Activated CD8-positive, alpha-beta T cell treated with anti-CD3 and anti-CD28 coated beads, Interleukin-2, amount 10 ng/mL, durations not matched to agents 7 days and 5 days (primary cell): ENCODE measurements at regions of chr4 and their contacts with region 1.

Region 1: GRCh38 chr4:99949034-99949998 is 759 bp downstream of the H2AZ1 start:
- DNase-seq: peak; percentile 96
- ATAC-seq: peak; percentile 25
- H3K4me3 Mint-ChIP-seq: no peak overlapping the region
- H3K27ac Mint-ChIP-seq: no peak overlapping the region
- H3K4me1 Mint-ChIP-seq: peaks cover 37% of the 10 kb centered on the region
- H3K27me3 Mint-ChIP-seq: no peaks in the 10 kb centered on the region

Region 2: GRCh38 chr4:99563310-99564186 is 385.8 kb before region 1 on chr4 and contains the start of gene TRMT10A:
- CTCF ChIA-PET with region 1: interaction called, 5 read pairs
- POLR2A ChIA-PET with region 1: interaction called, 12 read pairs
- DNase-seq: peak; percentile 97
- ATAC-seq: peak; percentile 95
- H3K4me3 Mint-ChIP-seq: peak within 1 kb of the TSS; percentile 89
- H3K27ac Mint-ChIP-seq: peak within 1 kb of the TSS; percentile 98
- H3K4me1 Mint-ChIP-seq: peaks cover 25% of the 10 kb centered on the region
- H3K27me3 Mint-ChIP-seq: peaks cover 19% of the 10 kb centered on the region
- total RNA-seq, gene TRMT10A: 7.4 to 8.2 TPM

Region 3: DNA sequence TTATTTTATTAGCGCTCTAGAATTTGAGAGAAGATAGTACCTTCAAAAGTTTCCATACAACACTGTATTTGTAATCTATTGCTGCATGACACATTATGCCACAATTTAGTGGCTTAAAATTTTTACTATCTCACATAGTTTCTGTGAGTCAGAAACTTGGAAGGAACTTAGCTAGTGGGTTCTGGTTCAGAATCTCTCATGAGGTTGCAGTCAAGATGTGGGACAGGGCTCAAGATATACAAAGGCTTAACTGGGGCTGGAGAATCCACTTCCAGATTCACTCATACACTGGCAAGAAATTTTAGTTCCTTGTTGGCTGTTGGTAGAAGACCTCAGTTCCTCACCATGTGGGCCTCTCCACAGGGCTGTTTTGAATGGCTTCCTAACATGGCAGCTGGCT is 280.2 kb before region 1 on chr4:
- CTCF ChIA-PET with region 1: no interaction called
- POLR2A ChIA-PET with region 1: no interaction called
- DNase-seq: no peak
- ATAC-seq: no peak
- H3K4me3 Mint-ChIP-seq: no peak overlapping the region
- H3K27ac Mint-ChIP-seq: no peak overlapping the region
- H3K4me1 Mint-ChIP-seq: no peaks in the 10 kb centered on the region
- H3K27me3 Mint-ChIP-seq: peaks cover 2% of the 10 kb centered on the region

Region 4: DNA sequence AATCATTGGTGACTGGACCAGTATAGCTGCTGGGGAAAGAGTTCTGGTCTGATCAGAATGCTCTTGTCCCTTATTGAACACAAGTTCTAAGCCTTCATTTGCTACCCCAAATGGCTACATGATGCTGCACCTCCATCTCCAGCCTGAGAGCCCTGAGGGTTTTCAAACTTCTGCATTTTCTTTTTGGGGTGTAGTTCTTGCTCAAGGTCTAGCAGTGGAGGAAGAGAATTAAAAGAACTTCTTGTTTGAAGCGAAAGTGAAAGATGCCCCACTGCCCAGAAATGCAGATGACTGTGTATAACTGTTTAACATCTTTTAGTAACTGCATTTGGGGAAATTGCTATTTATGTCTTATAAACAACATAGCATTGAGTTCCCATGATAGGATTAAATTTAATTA is 93.6 kb before region 1 on chr4:
- CTCF ChIA-PET with region 1: interaction called, 5 read pairs
- POLR2A ChIA-PET with region 1: interaction called, 10 read pairs
- DNase-seq: peak; percentile 40
- ATAC-seq: peak; percentile 67
- H3K4me3 Mint-ChIP-seq: peak overlapping the region; percentile 53
- H3K27ac Mint-ChIP-seq: peak overlapping the region; percentile 82
- H3K4me1 Mint-ChIP-seq: peaks cover 48% of the 10 kb centered on the region
- H3K27me3 Mint-ChIP-seq: no peaks in the 10 kb centered on the region

Region 5: GRCh38 chr4:99894161-99894997 is 54.9 kb before region 1 on chr4 and contains the start of gene LAMTOR3:
- CTCF ChIA-PET with region 1: interaction called, 23 read pairs
- POLR2A ChIA-PET with region 1: interaction called, 55 read pairs
- DNase-seq: peak; percentile 94
- ATAC-seq: peak; percentile 99
- H3K4me3 Mint-ChIP-seq: peak within 1 kb of the TSS; percentile 96
- H3K27ac Mint-ChIP-seq: peak within 1 kb of the TSS; percentile 96
- H3K4me1 Mint-ChIP-seq: peaks cover 38% of the 10 kb centered on the region
- H3K27me3 Mint-ChIP-seq: no peaks in the 10 kb centered on the region
- total RNA-seq, gene LAMTOR3: 26.8 to 28.8 TPM

Region 6: GRCh38 chr4:99965674-99966350 is 16.5 kb after region 1 on chr4:
- CTCF ChIA-PET with region 1: interaction called, 5 read pairs
- POLR2A ChIA-PET with region 1: interaction called, 10 read pairs
- DNase-seq: no peak
- ATAC-seq: peak; percentile 69
- H3K4me3 Mint-ChIP-seq: peak overlapping the region; percentile 42
- H3K27ac Mint-ChIP-seq: peak overlapping the region; percentile 42
- H3K4me1 Mint-ChIP-seq: peaks cover 22% of the 10 kb centered on the region
- H3K27me3 Mint-ChIP-seq: peaks cover 6% of the 10 kb centered on the region

Region 7: DNA sequence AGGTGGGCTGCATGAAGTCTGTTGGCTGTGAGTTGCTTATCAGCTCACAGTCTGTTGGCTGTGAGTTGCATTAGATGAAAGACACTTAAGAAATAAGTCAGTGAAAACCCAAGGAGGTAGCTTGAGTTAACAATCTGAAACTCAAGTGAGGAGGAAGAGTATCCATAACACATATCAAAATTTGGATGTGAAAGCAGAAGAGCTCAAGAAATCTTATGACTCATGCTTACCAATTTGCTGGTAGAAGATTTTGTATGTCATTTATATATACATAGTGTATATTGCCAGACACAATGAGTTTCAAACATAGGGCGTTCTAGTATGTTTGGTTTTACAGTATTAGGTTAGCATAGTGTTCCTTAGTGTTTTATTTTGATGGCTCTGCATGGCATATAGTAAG is 133.5 kb after region 1 on chr4:
- CTCF ChIA-PET with region 1: no interaction called
- POLR2A ChIA-PET with region 1: no interaction called
- DNase-seq: no peak
- ATAC-seq: no peak
- H3K4me3 Mint-ChIP-seq: no peak overlapping the region
- H3K27ac Mint-ChIP-seq: no peak overlapping the region
- H3K4me1 Mint-ChIP-seq: no peaks in the 10 kb centered on the region
- H3K27me3 Mint-ChIP-seq: no peaks in the 10 kb centered on the region

Region 8: GRCh38 chr4:100109921-100110320 is 160.6 kb after region 1 on chr4:
- CTCF ChIA-PET with region 1: no interaction called
- POLR2A ChIA-PET with region 1: no interaction called
- DNase-seq: no peak
- ATAC-seq: no peak
- H3K4me3 Mint-ChIP-seq: no peak overlapping the region
- H3K27ac Mint-ChIP-seq: no peak overlapping the region
- H3K4me1 Mint-ChIP-seq: peaks cover 37% of the 10 kb centered on the region
- H3K27me3 Mint-ChIP-seq: no peaks in the 10 kb centered on the region